SK-N-SH (cell line): ENCODE measurements at regions of chr15 and their contacts with region 1.

Region 1: GRCh38 chr15:41811432-41812195 is 16.3 kb upstream of the JMJD7 start:
- DNase-seq: peak; percentile 89
- H3K4me3 ChIP-seq: no peak overlapping the region; a peak in 1 of 4 replicates
- H3K27ac ChIP-seq: no peak overlapping the region
- H3K4me1 ChIP-seq: peaks cover 0 to 2% of the 10 kb centered on the region in 2 experiments; a peak in 1 of 4 replicates
- H3K27me3 ChIP-seq: no peaks in the 10 kb centered on the region
- CTCF ChIP-seq: peak; percentile 92
- EP300 ChIP-seq: no peak
- RAD21 ChIP-seq: peak; percentile 98

Region 2: GRCh38 chr15:41557673-41558399 is 253.8 kb before region 1 on chr15:
- CTCF ChIA-PET with region 1: interaction called, 14 read pairs
- POLR2A ChIA-PET with region 1: no interaction called
- DNase-seq: peak; percentile 89
- H3K4me3 ChIP-seq: peak overlapping the region; percentile 58 to 60
- H3K27ac ChIP-seq: peak overlapping the region; percentile 30 to 45
- H3K4me1 ChIP-seq: peaks cover 4 to 21% of the 10 kb centered on the region in 2 experiments; a peak in 3 of 4 replicates
- H3K27me3 ChIP-seq: no peaks in the 10 kb centered on the region
- CTCF ChIP-seq: peak; percentile 99
- EP300 ChIP-seq: 0 out of 4 replicates have a peak, but pooled peaks of 1 of the 2 experiments have one; percentile 17
- RAD21 ChIP-seq: peak; percentile 84

Region 3: DNA sequence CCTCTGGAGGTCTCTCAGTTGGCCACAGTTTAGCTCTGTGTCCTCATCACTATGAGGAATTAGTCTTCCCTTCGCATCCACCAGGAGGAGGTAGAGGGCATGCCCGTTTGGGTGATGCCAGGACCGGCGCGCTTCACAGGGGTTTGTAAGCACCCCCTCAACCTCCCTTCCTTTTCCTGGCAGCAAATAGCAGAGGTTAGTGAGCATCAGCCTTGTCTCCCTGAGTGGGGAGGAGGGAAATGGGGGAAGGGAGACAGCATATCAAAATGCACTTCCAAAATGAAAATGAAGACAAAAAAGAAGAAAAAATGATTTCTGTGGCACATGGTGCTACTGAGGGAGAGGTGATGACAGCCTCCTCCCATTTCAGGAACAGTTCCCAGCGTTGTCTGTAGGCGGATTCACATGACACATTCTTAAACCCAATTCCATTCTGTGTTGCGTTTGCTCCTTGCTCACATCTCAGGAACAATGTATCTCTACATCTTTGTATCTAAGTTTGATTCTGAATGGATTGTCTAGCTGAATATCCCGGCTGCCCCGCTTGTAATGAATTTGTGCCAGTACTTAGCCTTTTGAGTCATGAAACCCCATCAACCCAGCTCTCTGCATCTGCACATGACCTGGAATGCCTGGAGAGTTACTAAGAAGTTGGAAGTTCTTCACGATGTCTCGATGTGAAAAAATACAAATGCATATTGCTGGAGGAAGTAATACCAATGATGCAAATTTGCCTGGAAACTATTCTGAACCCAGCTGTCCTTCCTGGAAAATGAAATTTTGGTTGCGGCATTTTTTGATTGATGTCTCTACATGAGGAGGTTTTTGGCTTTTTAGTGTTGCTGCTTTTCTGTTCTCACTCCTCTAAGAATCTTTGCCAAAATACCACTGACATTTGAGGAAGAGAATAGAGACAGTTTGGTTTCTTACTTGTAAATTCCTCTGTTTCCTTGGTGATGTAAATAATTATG is 207.4 kb before region 1 on chr15:
- CTCF ChIA-PET with region 1: interaction called, 47 read pairs
- POLR2A ChIA-PET with region 1: no interaction called
- DNase-seq: peak; percentile 84
- H3K4me3 ChIP-seq: peak overlapping the region; percentile 31 to 51
- H3K27ac ChIP-seq: peak overlapping the region in 1 of 2 experiments; percentile 64; a peak in 2 of 4 replicates
- H3K4me1 ChIP-seq: peaks cover 3 to 5% of the 10 kb centered on the region in 2 experiments; a peak in 3 of 4 replicates
- H3K27me3 ChIP-seq: no peaks in the 10 kb centered on the region
- CTCF ChIP-seq: peak; percentile 85
- EP300 ChIP-seq: no peak
- RAD21 ChIP-seq: peak; percentile 74

Region 4: GRCh38 chr15:41774062-41774881 is 37.3 kb before region 1 on chr15 and contains the start of gene MAPKBP1:
- CTCF ChIA-PET with region 1: interaction called, 114 read pairs
- POLR2A ChIA-PET with region 1: interaction called, 13 read pairs
- DNase-seq: peak; percentile 94
- H3K4me3 ChIP-seq: peak within 1 kb of the TSS; percentile 76 to 88
- H3K27ac ChIP-seq: peak within 1 kb of the TSS; percentile 87 to 89
- H3K4me1 ChIP-seq: peaks cover 23 to 29% of the 10 kb centered on the region in 2 experiments
- H3K27me3 ChIP-seq: no peaks in the 10 kb centered on the region
- CTCF ChIP-seq: peak; percentile 75
- EP300 ChIP-seq: peak; percentile 15 to 48; a peak in 2 of 4 replicates
- RAD21 ChIP-seq: peak; percentile 56
- polyA plus RNA-seq, gene MAPKBP1: 5.2 and 6.7 TPM in 2 replicates

Region 5: DNA sequence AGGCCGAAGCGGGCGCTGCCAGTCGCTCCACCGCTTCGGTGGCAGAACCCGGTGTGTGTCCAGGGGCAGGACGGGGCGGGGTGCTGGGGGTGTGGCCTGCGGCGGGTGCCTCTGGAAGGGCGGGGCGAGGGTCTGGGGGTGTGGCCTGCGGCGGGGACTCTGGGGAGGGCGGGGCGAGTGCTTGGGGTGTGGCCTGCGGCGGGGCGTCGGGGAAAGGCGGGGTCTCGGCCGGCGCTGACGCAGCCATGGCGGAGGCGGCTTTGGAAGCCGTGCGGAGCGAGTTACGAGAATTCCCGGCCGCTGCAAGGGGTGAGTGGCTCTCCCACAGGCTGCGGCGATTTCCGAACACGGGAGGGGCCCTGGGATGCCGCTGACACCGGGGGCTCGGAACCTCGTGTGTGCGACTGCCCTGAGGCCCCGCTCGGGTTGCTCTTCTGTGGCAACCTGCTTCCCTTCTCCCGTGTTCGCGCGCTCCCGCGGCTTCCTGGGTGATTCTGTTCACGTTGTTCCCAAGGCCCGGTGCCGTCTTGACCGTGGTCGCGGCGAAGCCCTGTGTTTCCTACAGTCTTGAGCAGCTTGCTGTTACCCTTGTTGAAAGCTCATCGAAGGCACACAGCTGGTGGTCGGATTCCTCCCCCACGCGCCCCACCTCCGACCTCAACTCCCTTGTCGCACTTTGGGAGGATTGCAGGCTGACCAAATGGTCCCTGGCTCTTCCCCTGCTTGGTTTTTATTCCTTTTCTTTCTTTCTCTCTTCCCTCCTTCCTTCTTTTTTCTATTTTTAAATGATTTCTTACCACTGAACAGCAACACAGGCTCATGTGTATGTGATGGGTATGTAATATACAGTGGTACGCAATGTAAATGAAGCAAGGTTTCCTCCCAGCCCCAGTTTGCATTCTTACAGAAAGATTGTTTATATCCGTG is 16.5 kb after region 1 on chr15 and contains the start of gene JMJD7:
- CTCF ChIA-PET with region 1: interaction called, 66 read pairs
- POLR2A ChIA-PET with region 1: no interaction called
- DNase-seq: peak; percentile 100
- H3K4me3 ChIP-seq: peak within 1 kb of the TSS; percentile 83 to 91
- H3K27ac ChIP-seq: peak within 1 kb of the TSS; percentile 50 to 74; a peak in 3 of 4 replicates
- H3K4me1 ChIP-seq: peaks cover 3 to 4% of the 10 kb centered on the region in 2 experiments; a peak in 3 of 4 replicates
- H3K27me3 ChIP-seq: no peaks in the 10 kb centered on the region
- CTCF ChIP-seq: no peak
- EP300 ChIP-seq: no peak
- RAD21 ChIP-seq: no peak
- polyA plus RNA-seq, gene JMJD7: 6.5 and 6.8 TPM in 2 replicates

Region 6: DNA sequence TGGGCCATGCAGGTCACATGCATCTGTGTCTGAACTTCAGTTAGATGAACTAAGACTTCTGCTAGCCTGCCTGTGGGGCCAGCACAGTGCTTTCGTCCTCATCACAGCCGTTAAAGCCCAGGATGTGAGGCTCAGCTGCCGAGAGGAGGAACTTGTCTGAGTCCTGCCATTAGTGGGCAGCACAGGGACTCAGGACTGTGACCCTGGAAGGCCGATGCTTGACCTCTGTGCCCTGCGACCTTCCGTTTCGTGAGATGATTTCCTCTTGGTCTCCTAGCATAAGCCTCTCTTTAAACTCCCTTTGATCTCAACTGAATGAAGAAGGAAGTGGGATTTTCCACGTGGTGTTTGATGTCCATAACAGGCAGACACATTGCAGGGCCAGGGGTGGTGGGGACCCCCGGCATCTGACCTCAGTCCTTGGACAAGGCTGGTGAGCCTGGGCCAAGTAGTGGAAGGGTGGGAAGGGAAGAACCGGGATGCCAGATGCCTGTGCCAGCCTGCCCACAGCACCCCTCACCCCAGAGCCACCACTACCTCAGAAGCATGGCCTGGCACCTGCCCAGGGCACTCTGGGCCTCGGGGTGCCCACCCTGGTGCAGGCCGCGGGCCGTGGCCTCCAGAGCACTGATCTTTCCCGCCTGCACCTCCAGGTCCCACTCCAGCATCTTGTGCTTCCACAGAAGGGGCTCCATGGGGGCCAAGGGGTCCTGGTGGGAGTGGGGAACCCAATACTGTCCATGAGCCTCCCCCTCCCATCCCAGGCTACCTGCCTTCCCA is 48.6 kb after region 1 on chr15:
- CTCF ChIA-PET with region 1: no interaction called
- POLR2A ChIA-PET with region 1: no interaction called
- DNase-seq: no peak
- H3K4me3 ChIP-seq: no peak overlapping the region
- H3K27ac ChIP-seq: no peak overlapping the region
- H3K4me1 ChIP-seq: peaks cover 0 to 16% of the 10 kb centered on the region in 2 experiments; a peak in 1 of 4 replicates
- H3K27me3 ChIP-seq: no peaks in the 10 kb centered on the region
- CTCF ChIP-seq: no peak
- EP300 ChIP-seq: no peak
- RAD21 ChIP-seq: no peak